Gastrocnemius medialis (tissue), 4 donors: ENCODE measurements at regions of chr9 and their contacts with region 1.

Region 1: DNA sequence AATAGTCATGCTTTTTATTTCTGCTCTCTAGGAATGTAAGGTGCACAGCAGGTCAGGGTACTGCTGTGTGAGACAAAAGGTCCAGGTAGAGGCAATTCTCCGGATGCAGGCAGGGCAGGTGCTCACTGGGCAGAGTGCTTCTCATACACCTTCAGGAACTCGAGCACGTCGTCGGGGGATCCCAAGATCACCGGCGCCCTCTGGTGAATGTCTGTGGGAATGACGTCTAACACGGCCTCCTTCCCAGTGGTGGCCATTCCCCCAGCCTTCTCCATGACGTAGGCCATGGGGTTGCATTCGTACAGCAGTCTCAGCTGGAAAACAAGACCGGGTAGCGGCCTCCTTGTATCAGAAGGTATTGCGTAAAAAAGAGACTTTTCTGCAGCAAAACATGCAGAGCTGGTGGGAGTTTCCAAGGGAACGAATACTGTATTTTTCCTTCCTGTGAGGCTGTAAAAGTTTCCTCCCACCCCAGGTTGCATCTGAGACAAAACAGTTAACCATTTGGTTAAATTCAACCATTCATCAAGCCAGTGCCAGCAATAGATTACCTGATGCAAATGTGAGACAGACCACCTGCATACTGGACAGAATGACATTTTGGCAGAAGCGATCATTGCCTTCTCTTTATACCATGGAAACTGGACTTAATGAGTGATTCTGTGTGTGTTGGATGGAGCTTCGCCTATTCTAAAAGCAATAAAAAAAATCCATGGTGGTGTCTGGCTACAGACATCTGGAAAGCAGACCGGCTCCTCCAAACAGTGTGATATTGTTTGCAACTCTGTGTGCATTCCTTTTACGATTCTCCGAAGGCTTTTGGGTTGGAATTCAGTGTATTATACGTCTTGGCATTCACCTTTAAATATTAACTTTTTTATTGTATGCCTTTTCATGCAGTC is 9.9 kb upstream of the FBP2 start:
- DNase-seq: peak in 1 of 2 donors; percentile 58
- ATAC-seq: peak; percentile 14 to 21
- H3K4me3 ChIP-seq: no peak overlapping the region
- H3K27ac ChIP-seq: no peak overlapping the region
- H3K4me1 ChIP-seq: peaks cover 11 to 14% of the 10 kb centered on the region in 2 donors
- H3K27me3 ChIP-seq: no peaks in the 10 kb centered on the region
- CTCF ChIP-seq: peak; percentile 30 to 69 (median 58)
- POLR2A ChIP-seq: no peak

Region 2: GRCh38 chr9:94554439-94555391 is 48.8 kb before region 1 on chr9 and contains the start of gene PCAT7:
- in situ Hi-C with region 1: no loop called
- intact Hi-C with region 1: loop called (anchors 1 kb)
- DNase-seq: no peak
- ATAC-seq: peak in 1 of 2 donors; percentile 81
- H3K4me3 ChIP-seq: peak within 1 kb of the TSS in 1 of 4 donors; percentile 15
- H3K27ac ChIP-seq: peak within 1 kb of the TSS in 1 of 4 donors; percentile 34
- H3K4me1 ChIP-seq: no peaks in the 10 kb centered on the region
- H3K27me3 ChIP-seq: no peaks in the 10 kb centered on the region
- CTCF ChIP-seq: peak in 2 of 5 experiments; percentile 52 to 57
- POLR2A ChIP-seq: no peak
- total RNA-seq, gene PCAT7: not detected

Region 3: DNA sequence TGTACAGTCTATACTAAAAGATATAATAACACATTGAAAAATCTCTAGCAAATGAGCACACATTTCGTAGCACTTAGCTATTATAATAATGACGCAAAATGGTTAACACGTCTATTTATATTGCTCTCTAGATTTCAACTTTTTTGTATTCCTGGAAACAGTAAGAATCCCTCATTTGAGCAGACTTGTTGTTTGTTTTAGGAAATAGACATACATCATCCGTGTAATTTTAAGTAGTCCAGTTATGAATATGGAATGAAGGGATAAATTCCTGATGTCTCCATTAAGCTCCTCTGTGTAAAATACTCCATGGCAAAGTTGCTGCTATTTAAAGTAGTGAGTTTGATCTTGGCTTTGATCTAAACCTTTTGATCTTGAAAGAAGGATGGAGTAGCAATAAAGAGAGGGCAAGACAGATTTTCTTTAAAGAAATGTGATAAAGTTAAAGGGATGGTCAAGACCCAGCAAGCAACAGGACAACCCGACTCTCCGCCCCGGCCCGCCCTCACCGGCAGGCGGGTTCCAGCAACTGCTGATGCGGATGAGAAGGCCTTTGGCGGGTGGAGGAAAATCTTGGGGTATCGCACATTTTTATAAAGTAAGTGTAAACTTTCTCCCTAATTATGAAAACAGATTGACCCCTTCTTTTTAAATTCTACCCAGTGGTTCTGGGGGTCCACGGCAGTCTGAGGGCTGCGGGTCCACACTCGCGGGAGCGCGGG is 400.3 kb after region 1 on chr9:
- in situ Hi-C with region 1: no loop called
- intact Hi-C with region 1: no loop called
- DNase-seq: peak in 1 of 2 donors; percentile 32
- ATAC-seq: no peak
- H3K4me3 ChIP-seq: peak overlapping the region; percentile 66 to 84 (median 82)
- H3K27ac ChIP-seq: peak overlapping the region; percentile 95 to 98 (median 97)
- H3K4me1 ChIP-seq: peaks cover 17 to 34% of the 10 kb centered on the region in 2 donors
- H3K27me3 ChIP-seq: no peaks in the 10 kb centered on the region
- CTCF ChIP-seq: peak in 3 of 5 experiments; percentile 15 to 29 (median 23)
- POLR2A ChIP-seq: peak in 1 of 2 donors; percentile 9